Activated naive CD4-positive, alpha-beta T cell treated with anti-CD3 and anti-CD28 coated beads, Interleukin-2, amount 10 ng/mL, durations not matched to agents 7 days and 5 days (primary cell): ENCODE measurements at regions of chrX and their contacts with region 1.

Region 1: DNA sequence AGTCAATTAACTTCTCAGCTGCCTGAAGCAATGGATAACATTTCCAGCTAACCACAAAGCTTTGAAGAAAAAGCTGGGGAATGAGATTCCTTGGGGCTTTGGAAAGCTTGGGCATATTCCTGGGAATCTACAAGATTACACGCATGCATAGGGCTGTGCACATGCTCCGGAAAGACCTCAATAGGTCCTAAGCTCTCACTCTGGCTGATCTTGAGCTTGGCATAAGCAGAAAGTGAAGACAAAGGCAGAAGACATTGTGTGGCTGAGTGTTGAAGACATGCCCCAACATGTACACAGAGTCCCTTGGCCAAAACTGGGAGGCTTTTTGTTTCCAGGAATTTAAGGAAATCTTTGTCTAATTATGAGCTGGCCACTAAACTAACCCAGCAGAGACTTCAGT is 31.2 kb downstream of the ATG4A start:
- DNase-seq: no peak
- H3K4me3 Mint-ChIP-seq: no peak overlapping the region
- H3K27ac Mint-ChIP-seq: no peak overlapping the region
- H3K4me1 Mint-ChIP-seq: no peaks in the 10 kb centered on the region
- H3K27me3 Mint-ChIP-seq: no peaks in the 10 kb centered on the region

Region 2: DNA sequence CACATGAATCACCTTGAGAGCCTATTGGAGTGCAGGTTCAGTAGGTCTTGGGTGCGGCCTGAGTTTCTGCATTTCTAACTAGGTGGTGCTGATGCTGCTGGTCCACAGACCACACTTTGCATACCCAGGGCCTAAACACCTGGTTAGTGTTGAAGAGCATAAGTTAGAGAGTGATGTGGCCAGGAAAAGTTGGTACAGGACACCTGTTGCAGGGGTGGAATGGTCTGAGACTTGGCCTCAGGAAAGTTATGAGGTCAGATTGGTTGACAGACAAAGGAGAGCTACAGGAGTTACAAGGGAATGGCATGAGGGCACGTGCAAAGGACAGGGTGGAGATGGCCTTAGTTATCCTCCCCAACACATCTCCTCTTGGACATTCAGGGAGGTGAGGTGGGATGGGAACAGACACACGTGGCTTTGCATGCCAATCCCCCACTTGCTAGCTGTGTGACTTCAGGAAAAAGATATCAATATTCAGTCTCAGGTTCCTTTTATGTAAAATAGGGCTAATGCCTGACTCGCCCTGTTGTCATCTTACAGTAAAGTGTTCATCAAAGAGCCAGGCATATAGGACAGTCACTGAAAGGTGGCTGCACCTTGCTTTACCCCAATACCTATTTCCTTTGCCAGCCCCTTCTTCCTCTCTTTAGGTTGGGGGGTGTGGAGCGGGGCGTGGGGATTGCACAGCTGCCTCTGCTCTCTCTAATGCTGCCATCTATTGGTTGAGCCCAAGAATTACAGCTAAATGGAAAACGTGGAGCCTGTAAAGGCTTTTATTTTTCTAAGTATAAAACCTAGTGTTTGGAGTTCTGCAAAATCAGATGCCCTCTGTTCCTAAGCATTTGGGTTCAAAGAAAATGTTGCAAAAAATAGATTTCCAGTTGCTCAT is 16.3 kb after region 1 on chrX:
- CTCF ChIA-PET with region 1: interaction called, 10 read pairs
- DNase-seq: no peak
- H3K4me3 Mint-ChIP-seq: no peak overlapping the region
- H3K27ac Mint-ChIP-seq: no peak overlapping the region
- H3K4me1 Mint-ChIP-seq: no peaks in the 10 kb centered on the region
- H3K27me3 Mint-ChIP-seq: no peaks in the 10 kb centered on the region